ENCODE measurements at regions of chr2 and their contacts with region 1.

Region 1: DNA sequence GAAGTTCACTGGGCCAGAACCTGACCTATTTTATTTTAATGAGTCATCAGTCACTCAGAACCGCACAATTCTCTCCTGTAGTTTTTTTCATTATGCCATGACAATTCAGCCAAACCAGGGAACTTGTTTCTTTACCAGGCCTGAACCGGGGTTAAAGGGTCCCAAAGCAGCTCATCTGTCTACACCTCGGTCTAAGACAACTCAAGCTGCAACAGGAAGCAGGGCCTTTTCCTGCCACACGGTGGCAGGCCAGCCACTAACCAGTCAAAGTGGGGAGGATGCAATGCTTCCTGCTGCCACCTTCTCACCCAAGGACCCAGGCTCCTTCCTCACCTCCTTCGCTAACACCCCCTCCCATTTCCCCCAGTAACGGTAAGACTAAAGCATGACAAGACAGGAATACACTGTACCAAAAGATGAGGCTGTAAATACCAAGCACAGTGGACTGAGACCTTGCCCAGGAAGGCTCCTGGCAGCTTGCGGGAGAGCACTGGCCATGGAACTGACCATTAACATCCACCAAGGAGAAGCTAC is 56.7 kb upstream of the ACKR3 start:
- DNase-seq: peak; percentile 64 to 89 (median 80)
- ATAC-seq: peak; percentile 86 to 95
- H3K4me3 ChIP-seq: no peak overlapping the region
- H3K27ac ChIP-seq: no peak overlapping the region
- H3K4me1 ChIP-seq: no peaks in the 10 kb centered on the region
- H3K27me3 ChIP-seq: no peaks in the 10 kb centered on the region

Region 2: GRCh38 chr2:236569573-236569973 is 56.6 kb after region 1 on chr2 and contains the start of gene ACKR3:
- intact Hi-C with region 1: loop called in 2 of 4 experiments (anchors 5 kb)
- DNase-seq: peak; percentile 82 to 91 (median 90)
- ATAC-seq: peak; percentile 81 to 88
- H3K4me3 ChIP-seq: peak within 1 kb of the TSS; percentile 79
- H3K27ac ChIP-seq: peak within 1 kb of the TSS; percentile 97
- H3K4me1 ChIP-seq: peaks cover 2% of the 10 kb centered on the region
- H3K27me3 ChIP-seq: no peaks in the 10 kb centered on the region
- total RNA-seq, gene ACKR3: 27.4 to 50.1 (median 33.8) TPM

Measured in right cardiac atrium (tissue), 5 donors.